ENCODE measurements at regions of chr17 and their contacts with region 1.

Region 1: GRCh38 chr17:28777178-28777577 is 33.4 kb downstream of the TRAF4 start:
- DNase-seq: no peak
- ATAC-seq: no peak
- H3K4me3 ChIP-seq: no peak overlapping the region
- H3K27ac ChIP-seq: no peak overlapping the region
- H3K4me1 ChIP-seq: peaks cover 10 to 17% of the 10 kb centered on the region in 2 donors
- H3K27me3 ChIP-seq: no peaks in the 10 kb centered on the region
- CTCF ChIP-seq: no peak
- POLR2A ChIP-seq: no peak

Region 2: DNA sequence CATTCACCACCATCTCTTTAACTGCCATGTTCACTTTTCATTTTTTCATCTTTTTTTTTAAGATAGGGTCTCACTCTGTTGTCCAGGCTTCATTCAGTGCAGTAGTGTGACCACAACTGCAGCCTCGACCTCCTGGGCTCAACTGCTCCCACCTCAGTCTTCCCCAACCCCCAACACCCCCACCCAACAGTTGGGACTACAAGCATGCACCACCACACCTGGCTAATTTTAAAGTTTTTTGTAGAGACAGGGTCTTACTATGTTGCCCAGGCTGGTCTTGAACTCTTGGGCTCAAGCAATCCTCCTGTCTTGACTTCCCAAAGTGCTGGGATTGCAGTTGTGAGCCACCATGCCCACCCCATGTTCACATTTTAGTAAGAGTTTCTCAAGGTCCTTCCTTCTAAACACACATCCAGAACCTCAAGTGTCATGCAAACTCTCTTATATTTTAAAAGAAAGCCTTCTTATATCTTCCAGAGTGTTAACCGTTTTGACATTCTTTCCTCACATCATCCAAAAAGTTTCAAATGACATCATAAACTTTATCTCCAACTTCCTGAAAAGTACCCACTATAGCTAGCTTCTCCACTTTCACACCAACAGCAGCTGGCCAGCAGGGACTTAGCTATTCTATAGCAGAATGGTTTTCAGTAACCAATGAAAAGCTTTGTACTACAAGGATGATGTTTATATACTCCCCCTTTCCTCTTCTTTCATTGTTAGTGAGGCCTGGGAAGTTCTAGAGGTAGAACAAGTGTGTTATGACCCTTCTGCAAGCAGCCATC is 15.9 kb after region 1 on chr17:
- in situ Hi-C with region 1: no loop called
- intact Hi-C with region 1: loop called (anchors 2 kb)
- DNase-seq: no peak
- ATAC-seq: no peak
- H3K4me3 ChIP-seq: no peak overlapping the region
- H3K27ac ChIP-seq: no peak overlapping the region
- H3K4me1 ChIP-seq: peaks cover 20 to 25% of the 10 kb centered on the region in 2 donors
- H3K27me3 ChIP-seq: no peaks in the 10 kb centered on the region
- CTCF ChIP-seq: no peak
- POLR2A ChIP-seq: no peak

Measured in gastrocnemius medialis (tissue), 4 donors.